AG04449 (cell line): ENCODE measurements at regions of chr7 and their contacts with region 1.

Region 1: DNA sequence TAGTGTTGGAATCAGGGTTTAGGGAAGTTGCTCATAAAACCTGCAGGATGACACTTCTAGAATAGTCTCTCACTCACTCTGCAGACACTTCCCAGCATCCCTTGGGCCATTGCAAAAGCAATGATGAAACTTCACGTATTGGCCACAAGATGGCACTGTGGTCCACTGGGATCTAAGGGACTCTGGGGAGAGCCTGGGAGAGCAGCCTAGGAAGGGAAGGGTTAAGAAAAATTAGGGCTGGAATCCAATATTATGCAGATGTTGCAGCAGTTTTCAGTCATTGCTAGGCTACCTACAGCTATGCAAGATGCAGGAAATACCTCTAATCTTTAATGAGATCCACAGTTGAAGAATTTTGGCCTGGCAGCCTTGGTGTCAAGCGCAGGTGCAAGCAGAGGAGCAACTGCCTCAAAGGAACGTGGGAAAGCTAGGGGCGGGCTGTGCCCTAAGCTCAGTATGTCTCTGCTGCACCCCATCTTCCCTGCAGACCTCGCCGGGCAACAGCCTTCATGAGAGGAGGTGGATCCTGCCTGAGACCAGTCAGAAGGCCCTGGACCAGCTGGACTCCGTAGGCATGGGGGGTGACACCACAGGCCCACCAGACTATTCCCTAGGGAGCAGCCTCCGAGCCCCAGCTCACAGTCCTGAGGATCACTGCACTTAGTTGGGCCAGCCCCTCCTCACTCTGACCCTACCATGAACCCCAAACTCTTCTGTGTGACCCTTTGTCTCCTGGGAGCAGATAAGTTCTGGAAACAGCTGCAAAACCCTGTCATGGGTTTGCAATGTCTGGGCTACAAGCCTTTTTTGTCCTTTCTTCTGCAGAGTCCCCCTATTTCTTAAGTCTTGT is 127.9 kb upstream of the PRSS58 start:
- DNase-seq: peak; percentile 16
- H3K4me3 ChIP-seq: no peak overlapping the region
- CTCF ChIP-seq: peak; percentile 85

Region 2: GRCh38 chr7:142357953-142358520 is 27.7 kb before region 1 on chr7:
- CTCF ChIA-PET with region 1: interaction called, 106 read pairs
- POLR2A ChIA-PET with region 1: no interaction called
- DNase-seq: peak; percentile 36
- H3K4me3 ChIP-seq: no peak overlapping the region
- CTCF ChIP-seq: peak; percentile 80

Region 3: DNA sequence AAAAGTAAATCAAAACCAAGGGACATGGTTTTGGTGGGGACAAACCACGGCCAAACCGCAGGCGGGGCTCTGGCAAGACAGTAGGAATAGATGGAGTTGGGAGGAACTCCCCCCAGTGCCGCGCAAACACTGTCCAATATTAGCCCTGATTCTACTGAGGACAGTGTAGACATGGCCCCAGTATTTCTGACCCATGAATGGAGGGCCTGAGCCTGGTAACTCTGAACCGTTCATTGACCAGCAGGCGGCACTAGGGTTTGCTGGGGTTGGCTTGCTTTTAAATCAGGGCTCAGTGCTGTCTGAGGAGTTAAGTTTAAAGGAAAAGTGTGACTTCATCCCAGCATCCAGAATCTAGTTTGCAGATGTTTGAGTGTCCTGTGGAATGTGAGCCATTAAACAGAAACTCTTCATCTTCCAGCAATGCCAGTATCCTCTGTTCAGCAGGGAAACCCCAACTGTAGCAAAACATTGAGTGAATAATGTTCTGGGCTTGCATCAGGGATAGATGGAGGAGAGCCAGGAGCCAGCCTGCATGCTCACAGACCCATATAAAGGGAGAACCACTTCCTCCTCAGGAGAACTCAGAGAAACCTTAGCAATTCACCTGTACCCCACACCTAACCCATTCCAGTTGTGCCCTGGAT is 19.5 kb after region 1 on chr7:
- CTCF ChIA-PET with region 1: interaction called, 113 read pairs
- POLR2A ChIA-PET with region 1: no interaction called
- DNase-seq: peak; percentile 50
- H3K4me3 ChIP-seq: no peak overlapping the region
- CTCF ChIP-seq: peak; percentile 8

Region 4: DNA sequence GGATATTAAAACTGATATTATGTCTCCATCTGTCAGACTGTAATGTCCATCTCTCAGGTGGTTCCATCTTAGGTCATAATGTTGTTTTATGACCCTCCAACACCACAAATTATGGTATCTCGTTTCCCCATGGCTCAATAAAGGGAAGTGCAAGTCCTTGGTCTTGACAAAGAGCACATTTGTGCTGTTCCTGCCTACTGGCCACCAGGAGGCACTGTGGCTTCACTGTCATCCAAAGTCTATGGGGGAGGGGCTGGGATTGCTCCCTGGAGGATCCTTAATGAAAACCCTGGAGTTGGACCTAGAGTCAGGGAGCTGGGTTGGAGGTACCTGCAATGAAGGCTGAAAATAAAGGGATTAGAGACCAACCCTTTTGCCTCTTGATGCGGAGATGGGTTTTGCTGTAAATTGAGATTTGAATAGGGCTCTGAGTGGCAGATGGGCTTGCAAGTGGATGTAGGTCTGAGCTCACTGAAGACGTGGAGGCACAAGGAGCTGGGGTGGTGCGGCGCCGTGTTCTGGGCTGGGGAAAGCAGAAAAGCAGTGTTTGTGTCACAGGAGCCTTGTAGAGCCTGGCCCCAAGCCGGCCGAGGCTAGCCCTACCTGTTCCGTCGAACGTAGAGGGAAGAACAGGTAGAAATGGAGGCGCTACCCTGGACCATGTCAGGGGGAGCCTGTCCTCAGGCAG is 52.7 kb after region 1 on chr7:
- CTCF ChIA-PET with region 1: interaction called, 13 read pairs
- POLR2A ChIA-PET with region 1: no interaction called
- DNase-seq: no peak
- H3K4me3 ChIP-seq: no peak overlapping the region
- CTCF ChIP-seq: peak; percentile 62

Region 5: DNA sequence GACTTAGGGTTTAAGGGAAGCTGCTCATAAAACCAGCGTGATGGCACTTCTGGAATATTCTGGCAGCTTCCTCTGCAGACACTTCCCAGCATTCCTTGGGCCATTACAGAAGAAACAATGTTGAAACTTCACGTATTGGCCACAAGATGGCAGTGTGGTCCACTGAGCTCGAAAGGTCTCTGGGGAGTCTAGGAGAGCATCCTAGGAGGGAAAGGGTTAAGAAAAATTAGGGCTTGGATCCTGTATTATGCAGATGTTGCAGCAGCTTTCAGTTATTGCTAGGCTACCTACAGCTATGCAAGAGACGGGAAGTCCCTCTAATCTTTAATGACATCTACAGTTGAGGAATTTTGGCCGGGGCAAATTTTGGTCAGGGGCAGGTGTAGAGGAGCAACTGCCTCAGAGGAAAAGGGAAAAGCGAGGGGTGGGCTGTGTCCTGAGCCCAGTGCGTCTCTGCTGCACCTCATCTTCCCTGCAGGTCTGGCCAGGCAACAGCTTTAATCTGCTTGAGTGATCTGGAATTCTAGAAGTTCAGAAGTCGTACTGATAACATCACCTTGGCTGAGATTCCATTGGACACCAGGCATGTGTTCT is 92.9 kb after region 1 on chr7:
- CTCF ChIA-PET with region 1: interaction called, 101 read pairs
- POLR2A ChIA-PET with region 1: no interaction called
- DNase-seq: no peak
- H3K4me3 ChIP-seq: no peak overlapping the region
- CTCF ChIP-seq: peak; percentile 66

Region 6: DNA sequence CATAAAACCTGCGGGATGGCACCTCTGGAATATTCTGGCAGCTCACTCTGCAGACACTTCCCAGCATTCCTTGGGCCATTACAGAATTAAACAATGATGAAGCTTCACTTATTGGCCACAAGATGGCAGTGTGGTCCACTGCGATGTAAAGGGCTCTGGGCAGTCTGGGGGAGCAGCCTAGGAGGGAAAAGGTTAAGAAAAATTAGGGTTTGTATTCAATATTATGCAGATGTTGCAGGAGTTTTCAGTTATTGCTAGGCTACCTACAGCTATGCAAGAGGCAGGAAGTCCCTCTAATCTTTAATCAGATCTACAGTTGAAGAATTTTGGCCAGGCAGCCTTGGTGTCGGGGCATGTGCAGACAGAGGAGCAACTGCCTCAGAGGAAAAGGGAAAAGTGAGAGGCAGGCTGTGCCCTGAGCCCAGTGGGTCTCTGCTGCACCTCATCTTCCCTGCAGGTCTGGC is 130.4 kb after region 1 on chr7:
- CTCF ChIA-PET with region 1: interaction called, 21 read pairs
- POLR2A ChIA-PET with region 1: no interaction called
- DNase-seq: peak; percentile 29
- H3K4me3 ChIP-seq: no peak overlapping the region
- CTCF ChIP-seq: peak; percentile 68